HEK293T (cell line): ENCODE measurements at regions of chr1 and their contacts with region 1.

Region 1: DNA sequence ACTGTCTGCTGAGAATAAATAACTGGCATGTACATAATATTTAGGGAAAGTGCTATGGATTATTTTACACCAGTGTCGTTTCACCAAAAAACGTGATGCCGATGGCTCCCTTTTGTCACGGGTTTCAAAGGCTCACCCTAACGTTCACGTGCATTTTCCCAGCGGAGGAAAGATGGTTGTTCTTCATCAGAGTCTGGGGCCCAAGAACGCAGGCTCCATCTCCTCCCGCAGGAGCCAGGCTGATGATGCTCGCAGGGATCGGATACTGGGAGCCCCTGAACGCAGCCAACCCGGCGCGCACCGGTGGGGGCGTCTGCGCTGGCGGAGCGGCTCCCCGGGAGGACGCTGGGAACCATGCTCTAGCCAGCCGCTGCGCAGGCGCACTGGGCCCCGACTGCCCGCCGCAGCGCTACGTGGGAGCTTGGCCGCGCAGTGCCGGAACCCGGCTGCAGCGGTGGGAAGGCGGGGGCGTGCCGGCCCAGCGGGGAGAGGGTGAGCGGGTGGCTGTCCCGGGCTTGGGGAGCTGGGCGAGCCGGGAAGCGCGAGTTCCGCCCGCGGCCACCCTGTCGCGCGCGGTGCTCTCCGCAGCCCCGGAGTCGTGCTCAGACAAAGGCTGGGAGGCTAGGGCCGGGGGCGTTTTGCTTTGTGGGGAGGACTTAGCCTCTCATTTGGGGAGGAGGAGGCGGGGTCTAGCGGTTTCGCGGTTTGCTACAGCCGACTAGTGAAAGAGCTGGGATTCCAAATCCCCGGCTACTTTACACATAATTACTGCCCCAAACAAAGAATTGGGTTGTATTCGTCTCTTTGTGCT is at the start of gene ZFP69B:
- DNase-seq: peak; percentile 96

Region 2: DNA sequence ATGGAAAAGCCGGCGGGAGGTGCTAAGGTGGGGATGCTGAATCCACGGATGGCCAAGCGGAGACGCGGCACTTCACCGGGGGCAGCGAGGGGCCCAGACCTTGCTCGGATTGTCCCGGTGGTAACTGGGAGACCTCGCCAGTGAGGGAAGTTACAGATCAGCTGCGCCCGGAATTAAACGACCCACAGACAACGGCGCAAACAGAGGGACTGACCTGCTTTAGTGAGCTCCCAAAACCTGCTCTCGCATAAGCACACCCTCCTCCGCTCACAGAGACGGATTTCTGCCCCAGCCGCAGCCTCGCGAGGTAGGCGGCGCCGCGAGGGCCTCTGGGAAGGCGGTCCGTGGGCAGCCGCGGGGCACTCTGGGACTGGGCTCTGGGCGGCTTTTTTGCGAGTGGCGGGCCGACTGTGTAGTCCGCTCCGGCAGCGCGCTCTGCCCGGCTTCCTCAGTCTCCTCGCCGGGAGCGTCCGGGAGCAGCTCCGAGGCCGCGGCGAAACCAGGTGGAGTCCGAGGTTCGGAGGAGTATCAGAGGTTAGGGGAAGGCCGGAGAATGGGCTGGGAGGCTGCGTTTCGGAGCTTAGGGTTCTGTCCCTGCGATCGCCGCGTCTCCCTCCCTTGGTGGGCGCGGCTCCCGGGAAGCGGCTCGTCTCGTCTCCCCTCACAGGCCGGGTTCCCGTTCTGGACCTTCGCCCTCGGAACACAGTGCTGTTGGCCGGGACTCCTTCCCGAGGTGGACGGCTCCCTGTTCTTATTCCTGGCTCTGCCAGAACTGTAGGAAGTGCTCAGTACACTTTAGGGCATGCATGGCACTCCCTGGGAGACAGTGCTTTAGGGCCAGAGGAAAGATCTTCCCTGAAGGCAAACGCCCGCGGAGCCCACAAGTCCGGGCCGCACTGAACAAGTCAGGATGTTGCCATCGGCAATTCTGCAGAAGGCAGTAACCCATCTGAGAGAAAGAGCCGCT is 58.8 kb after region 1 on chr1 and contains the start of gene EXO5:
- CTCF ChIA-PET with region 1: no interaction called
- POLR2A ChIA-PET with region 1: interaction called, 13 read pairs
- DNase-seq: peak; percentile 51

Region 3: GRCh38 chr1:40736085-40736531 is 286.2 kb after region 1 on chr1:
- CTCF ChIA-PET with region 1: no interaction called
- POLR2A ChIA-PET with region 1: no interaction called
- DNase-seq: no peak